Lower leg skin (tissue), 4 donors: ENCODE measurements at regions of chr17 and their contacts with region 1.

Region 1: GRCh38 chr17:73255671-73256181 is 6.0 kb downstream of the CPSF4L start:
- DNase-seq: peak in 1 of 2 donors; percentile 88
- H3K4me3 ChIP-seq: no peak overlapping the region
- CTCF ChIP-seq: peak in 1 of 3 donors; percentile 96
- POLR2A ChIP-seq: no peak

Region 2: GRCh38 chr17:73166731-73167581 is 88.8 kb before region 1 on chr17:
- intact Hi-C with region 1: no loop called
- DNase-seq: no peak
- H3K4me3 ChIP-seq: no peak overlapping the region
- CTCF ChIP-seq: no peak
- POLR2A ChIP-seq: no peak

Region 3: GRCh38 chr17:73192894-73193701 is 62.6 kb before region 1 on chr17 and contains the start of gene COG1:
- intact Hi-C with region 1: no loop called
- DNase-seq: peak; percentile 63 to 96
- H3K4me3 ChIP-seq: peak within 1 kb of the TSS; percentile 47
- CTCF ChIP-seq: no peak
- POLR2A ChIP-seq: no peak
- total RNA-seq, gene COG1: 18.3 to 33.2 (median 23.9) TPM

Region 4: DNA sequence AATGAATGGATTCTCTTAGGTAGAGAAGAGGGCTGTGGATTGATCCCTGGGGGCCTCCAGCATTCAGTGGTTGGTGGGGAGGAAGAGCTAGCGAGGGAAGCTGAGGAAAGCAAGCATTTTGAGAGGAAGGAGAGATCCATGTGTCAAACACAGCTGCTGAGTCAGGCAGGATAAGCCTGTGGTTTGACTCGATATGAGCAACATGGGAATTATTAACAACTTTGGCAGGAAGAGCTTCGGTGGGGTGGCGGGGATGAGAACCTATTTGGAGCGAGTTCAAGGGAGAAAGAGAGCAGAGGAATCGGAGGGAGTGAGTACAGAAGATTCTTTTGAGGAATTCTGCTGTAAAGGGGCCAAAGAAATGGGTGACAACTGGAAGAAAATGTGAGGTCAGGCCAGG is 115.6 kb after region 1 on chr17:
- intact Hi-C with region 1: loop called (anchors 1 kb)
- DNase-seq: no peak
- H3K4me3 ChIP-seq: no peak overlapping the region
- CTCF ChIP-seq: no peak
- POLR2A ChIP-seq: no peak